Endothelial cell of umbilical vein (primary cell): ENCODE measurements at regions of chr3 and their contacts with region 1.

Region 1: DNA sequence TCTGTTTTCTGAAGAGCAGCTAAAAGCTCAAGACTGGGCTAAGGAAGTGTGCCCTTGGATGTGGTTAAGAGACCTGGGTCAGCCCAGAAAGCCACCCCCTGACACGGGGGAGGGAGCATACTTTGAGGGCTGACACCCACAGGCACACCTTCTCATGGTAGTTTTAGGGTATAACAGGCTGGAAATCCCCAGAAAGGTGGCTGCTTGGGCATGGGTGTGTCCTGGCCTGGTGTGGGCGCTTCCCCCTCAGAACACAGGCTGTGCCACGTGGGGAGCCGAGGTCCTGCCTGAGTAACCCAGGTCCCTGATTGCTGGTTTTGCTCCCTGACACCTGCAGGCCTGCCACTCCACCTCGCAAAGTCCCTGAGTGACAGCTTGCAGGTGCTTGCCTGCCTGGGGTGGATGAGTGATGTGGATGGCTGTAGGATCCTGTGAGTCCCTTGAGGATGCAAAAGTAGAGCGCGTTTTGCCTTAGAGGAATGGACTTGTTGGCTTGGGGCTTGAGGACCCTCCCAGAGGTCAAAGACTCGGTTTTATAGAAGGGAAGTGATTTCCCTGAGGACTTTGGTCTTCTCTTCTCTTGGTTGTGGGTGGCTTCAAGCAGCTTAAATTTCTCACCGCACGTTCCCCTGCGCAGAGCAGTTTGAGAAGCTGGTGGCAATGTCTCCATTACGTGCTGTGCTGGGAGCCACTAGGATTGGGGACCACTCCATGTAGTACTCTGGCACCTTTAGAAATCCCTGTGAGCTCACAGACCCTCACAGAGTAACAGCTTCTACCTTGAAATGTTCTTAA is 94.4 kb downstream of the DNASE1L3 start:
- DNase-seq: peak; percentile 31
- H3K4me3 ChIP-seq: no peak overlapping the region
- H3K27ac ChIP-seq: peak overlapping the region; percentile 83
- H3K4me1 ChIP-seq: peaks cover 67% of the 10 kb centered on the region
- H3K27me3 ChIP-seq: no peaks in the 10 kb centered on the region
- CTCF ChIP-seq: no peak
- POLR2A ChIP-seq: no peak

Region 2: DNA sequence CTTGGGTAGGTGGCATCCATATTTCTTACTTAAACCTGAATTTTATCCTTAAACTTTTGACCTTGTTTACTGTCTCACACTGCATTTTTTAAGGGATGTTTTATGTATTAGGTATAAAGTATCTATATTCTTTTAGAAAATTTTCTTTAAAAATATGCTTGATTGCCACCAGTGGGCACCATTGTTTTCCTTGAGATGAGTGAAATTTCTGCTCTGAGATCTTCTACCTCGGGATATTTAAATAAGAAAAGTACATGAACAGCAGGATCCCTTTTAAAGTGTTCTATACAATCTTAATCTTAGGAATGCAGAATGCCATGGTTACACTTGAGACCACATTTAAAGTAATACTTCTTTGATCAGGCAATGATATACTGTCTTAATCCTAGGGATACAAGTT is 251.5 kb before region 1 on chr3:
- CTCF ChIA-PET with region 1: no interaction called
- POLR2A ChIA-PET with region 1: no interaction called
- dilution Hi-C with region 1: no loop called
- intact Hi-C with region 1: loop called (anchors 10 kb)
- DNase-seq: peak; percentile 47
- H3K4me3 ChIP-seq: no peak overlapping the region
- H3K27ac ChIP-seq: no peak overlapping the region
- H3K4me1 ChIP-seq: no peaks in the 10 kb centered on the region
- H3K27me3 ChIP-seq: no peaks in the 10 kb centered on the region
- CTCF ChIP-seq: peak; percentile 16 to 22
- POLR2A ChIP-seq: no peak

Region 3: GRCh38 chr3:57961828-57962447 is 154.4 kb before region 1 on chr3:
- CTCF ChIA-PET with region 1: interaction called, 4 read pairs
- POLR2A ChIA-PET with region 1: no interaction called
- dilution Hi-C with region 1: no loop called
- intact Hi-C with region 1: loop called (anchors 1 kb)
- DNase-seq: peak; percentile 58
- H3K4me3 ChIP-seq: no peak overlapping the region
- H3K27ac ChIP-seq: no peak overlapping the region
- H3K4me1 ChIP-seq: peaks cover 17% of the 10 kb centered on the region
- H3K27me3 ChIP-seq: no peaks in the 10 kb centered on the region
- CTCF ChIP-seq: peak; percentile 30 to 65
- POLR2A ChIP-seq: no peak

Region 4: DNA sequence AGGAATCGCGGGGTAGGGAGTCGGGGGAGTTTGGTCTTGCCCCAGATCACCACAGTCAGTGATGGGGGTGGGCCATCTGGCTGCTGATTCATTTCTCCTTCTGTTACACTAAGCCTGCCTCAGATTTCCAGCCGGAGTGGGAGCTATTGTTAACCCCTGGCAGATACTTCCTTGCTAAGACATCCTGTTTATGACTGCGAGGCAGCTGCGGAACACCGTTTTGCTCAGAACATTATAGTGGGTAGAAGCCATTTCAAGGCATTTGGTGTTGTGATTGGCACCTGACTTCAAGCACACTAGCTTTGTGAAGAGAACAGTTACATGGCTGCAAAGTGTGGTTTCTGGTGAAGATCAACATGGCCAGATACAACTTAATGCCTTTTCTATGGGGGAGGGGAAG is 34.3 kb before region 1 on chr3:
- CTCF ChIA-PET with region 1: no interaction called
- POLR2A ChIA-PET with region 1: no interaction called
- dilution Hi-C with region 1: no loop called
- intact Hi-C with region 1: no loop called
- DNase-seq: peak; percentile 99
- H3K4me3 ChIP-seq: no peak overlapping the region
- H3K27ac ChIP-seq: peak overlapping the region; percentile 93
- H3K4me1 ChIP-seq: peaks cover 62% of the 10 kb centered on the region
- H3K27me3 ChIP-seq: no peaks in the 10 kb centered on the region
- CTCF ChIP-seq: no peak
- POLR2A ChIP-seq: peak; percentile 47

Region 5: DNA sequence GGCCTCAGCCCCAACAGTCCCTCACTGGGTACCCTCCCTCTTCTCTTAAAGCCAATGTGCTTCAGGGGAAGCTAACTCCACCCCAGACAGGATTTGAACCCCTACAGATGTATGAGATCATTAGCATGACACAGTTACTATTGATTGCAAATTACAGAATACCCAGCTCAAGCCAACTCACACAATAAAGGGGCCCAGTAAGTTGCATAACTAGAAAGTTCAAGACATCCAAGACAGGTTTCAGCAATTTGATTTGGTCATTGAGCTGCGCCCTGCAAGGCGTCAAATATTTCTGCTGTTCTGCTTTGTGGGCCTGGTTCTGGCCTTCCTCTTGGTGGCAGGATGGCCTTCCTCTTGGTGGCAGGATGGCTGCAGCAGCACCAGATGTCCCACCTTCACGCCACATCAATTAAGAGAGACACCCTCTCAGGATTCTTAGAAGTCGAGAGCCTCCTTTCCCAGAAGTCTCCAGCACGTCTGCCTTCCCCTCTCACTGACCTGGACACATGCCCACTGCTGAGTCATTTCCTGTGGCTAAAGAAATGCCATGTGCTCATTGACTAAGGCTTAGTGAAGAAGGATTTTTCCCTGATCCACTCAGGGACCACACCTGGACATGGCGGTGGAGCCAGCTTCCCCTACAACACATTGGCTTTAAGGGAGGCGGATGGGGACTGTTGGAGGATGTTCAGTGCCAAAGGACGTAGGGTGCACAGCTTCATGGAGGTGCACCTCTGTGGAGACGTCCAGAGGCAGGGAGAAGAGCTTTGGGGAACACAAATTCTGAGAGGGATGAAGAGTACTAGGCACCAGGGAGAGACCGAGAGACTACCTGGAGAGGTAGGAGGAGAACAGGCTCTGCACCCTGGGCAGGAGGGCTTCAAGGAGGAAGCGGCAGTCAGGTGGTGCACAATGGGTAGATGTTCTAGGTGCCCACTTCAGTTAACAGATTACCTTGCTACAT is 45.4 kb after region 1 on chr3:
- CTCF ChIA-PET with region 1: no interaction called
- POLR2A ChIA-PET with region 1: interaction called, 4 read pairs
- dilution Hi-C with region 1: no loop called
- intact Hi-C with region 1: loop called (anchors 1 kb)
- DNase-seq: peak; percentile 96
- H3K4me3 ChIP-seq: no peak overlapping the region
- H3K27ac ChIP-seq: peak overlapping the region; percentile 76
- H3K4me1 ChIP-seq: peaks cover 41% of the 10 kb centered on the region
- H3K27me3 ChIP-seq: no peaks in the 10 kb centered on the region
- CTCF ChIP-seq: no peak
- POLR2A ChIP-seq: peak; percentile 74